ENCODE measurements at regions of chrX and their contacts with region 1.

Region 1: GRCh38 chrX:45505214-45505613 is 304.5 kb upstream of the DIPK2B start:
- DNase-seq: peak; percentile 51
- H3K4me3 Mint-ChIP-seq: no peak overlapping the region
- H3K27ac Mint-ChIP-seq: peak overlapping the region; percentile 69
- H3K4me1 Mint-ChIP-seq: peaks cover 19% of the 10 kb centered on the region
- H3K27me3 Mint-ChIP-seq: peaks cover 11% of the 10 kb centered on the region
- CTCF ChIP-seq: no peak

Region 2: DNA sequence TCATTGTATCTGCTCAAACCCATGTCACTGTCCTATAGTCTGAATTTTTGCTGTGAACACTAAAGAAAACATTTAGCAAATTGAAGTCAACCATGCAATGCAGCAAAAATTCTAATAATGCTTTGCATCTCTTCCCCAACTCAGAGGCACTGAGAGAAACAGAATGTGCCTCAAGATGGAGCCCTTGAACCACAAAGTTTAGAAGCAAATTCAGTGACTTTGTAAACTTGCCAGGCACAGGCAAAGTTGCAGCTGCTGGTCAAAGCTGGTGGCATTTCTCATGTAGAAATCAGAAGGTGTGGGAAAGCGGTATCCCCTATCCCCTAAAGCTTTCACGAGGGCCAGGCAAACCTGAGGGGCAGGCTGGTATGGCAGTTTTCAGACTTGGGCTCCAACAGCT is 182.8 kb before region 1 on chrX:
- CTCF ChIA-PET with region 1: interaction called, 7 read pairs
- POLR2A ChIA-PET with region 1: no interaction called
- intact Hi-C with region 1: loop called (anchors 1 kb)
- DNase-seq: peak; percentile 77
- H3K4me3 Mint-ChIP-seq: no peak overlapping the region
- H3K27ac Mint-ChIP-seq: no peak overlapping the region
- H3K4me1 Mint-ChIP-seq: no peaks in the 10 kb centered on the region
- H3K27me3 Mint-ChIP-seq: peaks cover 68% of the 10 kb centered on the region
- CTCF ChIP-seq: peak; percentile 63

Region 3: DNA sequence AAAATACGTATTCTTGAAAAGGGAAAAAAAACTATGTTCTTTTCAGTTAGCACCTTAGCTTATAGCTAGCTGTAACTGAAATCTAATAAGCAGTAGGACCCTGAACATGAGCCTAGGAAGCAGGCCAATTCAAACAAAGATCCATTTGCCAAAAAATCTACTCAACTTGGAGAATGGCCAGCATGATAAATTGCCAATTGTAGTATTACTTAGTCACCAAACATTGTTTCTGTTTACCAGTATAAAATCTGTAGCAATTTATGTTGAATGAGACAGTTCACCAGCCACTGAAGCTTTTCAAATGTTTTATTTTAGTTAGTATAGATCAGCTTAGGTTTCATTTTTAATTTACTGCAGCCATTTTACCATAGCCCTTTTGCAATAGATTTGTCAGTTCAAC is 19.1 kb after region 1 on chrX:
- CTCF ChIA-PET with region 1: no interaction called
- POLR2A ChIA-PET with region 1: no interaction called
- intact Hi-C with region 1: no loop called
- DNase-seq: peak; percentile 63
- H3K4me3 Mint-ChIP-seq: no peak overlapping the region
- H3K27ac Mint-ChIP-seq: no peak overlapping the region
- H3K4me1 Mint-ChIP-seq: peaks cover 8% of the 10 kb centered on the region
- H3K27me3 Mint-ChIP-seq: peaks cover 20% of the 10 kb centered on the region
- CTCF ChIP-seq: no peak